HEK293 (cell line): ENCODE measurements at regions of chr6 and their contacts with region 1.

Region 1: DNA sequence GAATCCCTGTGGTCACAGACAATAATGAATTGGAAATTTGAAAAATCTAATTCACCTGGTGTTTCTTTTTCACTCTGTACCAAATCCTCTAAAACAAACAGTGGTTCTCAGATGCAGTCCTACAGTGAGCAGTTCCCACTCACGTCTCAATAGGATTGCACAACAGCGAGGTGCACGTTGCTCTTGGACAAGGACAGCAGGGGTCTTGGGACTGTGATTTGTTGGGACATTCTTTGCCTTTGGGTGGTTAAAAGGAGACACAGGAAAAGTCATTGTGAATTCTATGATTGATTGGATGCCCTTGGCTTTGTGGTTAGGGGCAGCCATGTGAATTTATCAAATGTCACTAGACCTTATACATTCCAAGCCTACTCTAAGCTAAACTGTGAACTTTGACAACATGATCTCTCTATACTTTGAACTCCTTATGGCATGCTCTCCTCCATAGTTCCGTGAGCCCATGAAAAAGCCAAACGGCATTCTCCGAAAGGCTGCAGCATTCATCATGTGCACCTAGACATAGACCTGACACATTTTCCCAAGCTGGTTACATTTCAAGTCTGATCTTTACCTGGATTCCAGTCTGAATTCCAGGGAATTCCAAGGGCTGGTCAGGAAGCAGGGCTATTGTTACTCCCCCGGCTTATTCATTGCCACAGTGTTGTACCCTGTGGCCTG is 647 bp downstream of the UNC93A start:
- H3K4me3 ChIP-seq: no peak overlapping the region
- H3K27ac ChIP-seq: no peak overlapping the region
- H3K4me1 ChIP-seq: no peaks in the 10 kb centered on the region
- CTCF ChIP-seq: no peak

Region 2: DNA sequence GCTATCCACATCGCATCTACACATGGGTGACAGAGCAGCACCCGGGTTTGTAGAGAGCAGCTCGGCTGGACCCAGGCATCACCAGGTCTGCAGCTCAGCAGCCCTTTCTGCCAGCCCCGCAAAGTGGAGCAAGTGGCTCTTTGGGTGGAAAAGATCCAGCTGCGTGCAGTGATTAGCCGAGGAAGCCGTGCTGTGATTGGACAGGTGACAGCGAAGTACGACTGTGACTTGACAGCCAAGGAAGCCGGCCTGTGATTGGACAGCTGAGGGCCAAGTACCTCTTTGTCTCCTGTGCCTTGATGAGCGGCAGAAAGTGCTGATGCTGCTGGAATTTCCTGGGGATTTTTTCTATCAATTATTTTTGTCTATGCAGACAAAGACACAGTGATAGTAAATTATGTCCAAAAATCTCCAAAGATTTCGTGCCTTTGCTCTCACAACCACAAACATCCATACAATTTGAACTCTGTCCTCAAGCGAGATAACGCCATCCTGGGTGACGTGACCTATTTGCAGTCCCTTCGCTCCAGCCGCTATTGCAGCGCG is 71.7 kb before region 1 on chr6:
- CTCF ChIA-PET with region 1: interaction called, 13 read pairs
- POLR2A ChIA-PET with region 1: no interaction called
- H3K4me3 ChIP-seq: no peak overlapping the region
- H3K27ac ChIP-seq: no peak overlapping the region
- H3K4me1 ChIP-seq: no peaks in the 10 kb centered on the region
- CTCF ChIP-seq: no peak